ENCODE measurements at regions of chr18 and their contacts with region 1.

Region 1: GRCh38 chr18:79951578-79952455 is at the start of gene SLC66A2:
- DNase-seq: peak; percentile 85 to 98 (median 91)
- ATAC-seq: peak; percentile 86 to 91
- H3K4me3 Mint-ChIP-seq: peak within 1 kb of the TSS; percentile 77 to 93 (median 86)
- H3K27ac Mint-ChIP-seq: peak within 1 kb of the TSS; percentile 68 to 93 (median 83)
- H3K4me1 Mint-ChIP-seq: peaks cover 11 to 38% (median 25%) of the 10 kb centered on the region in 4 donors
- H3K27me3 Mint-ChIP-seq: no peaks in the 10 kb centered on the region
- polyA plus RNA-seq, gene SLC66A2: 14.1 to 22.0 (median 19.4) TPM

Region 2: GRCh38 chr18:79476918-79477571 is 474.8 kb before region 1 on chr18:
- POLR2A ChIA-PET with region 1: no interaction called
- DNase-seq: no peak
- ATAC-seq: no peak
- H3K4me3 Mint-ChIP-seq: peak overlapping the region in 1 of 10 donors; percentile 10
- H3K27ac Mint-ChIP-seq: peak overlapping the region; percentile 38 to 95 (median 80)
- H3K4me1 Mint-ChIP-seq: peaks cover 6 to 20% (median 12%) of the 10 kb centered on the region in 4 donors
- H3K27me3 Mint-ChIP-seq: no peaks in the 10 kb centered on the region

Region 3: DNA sequence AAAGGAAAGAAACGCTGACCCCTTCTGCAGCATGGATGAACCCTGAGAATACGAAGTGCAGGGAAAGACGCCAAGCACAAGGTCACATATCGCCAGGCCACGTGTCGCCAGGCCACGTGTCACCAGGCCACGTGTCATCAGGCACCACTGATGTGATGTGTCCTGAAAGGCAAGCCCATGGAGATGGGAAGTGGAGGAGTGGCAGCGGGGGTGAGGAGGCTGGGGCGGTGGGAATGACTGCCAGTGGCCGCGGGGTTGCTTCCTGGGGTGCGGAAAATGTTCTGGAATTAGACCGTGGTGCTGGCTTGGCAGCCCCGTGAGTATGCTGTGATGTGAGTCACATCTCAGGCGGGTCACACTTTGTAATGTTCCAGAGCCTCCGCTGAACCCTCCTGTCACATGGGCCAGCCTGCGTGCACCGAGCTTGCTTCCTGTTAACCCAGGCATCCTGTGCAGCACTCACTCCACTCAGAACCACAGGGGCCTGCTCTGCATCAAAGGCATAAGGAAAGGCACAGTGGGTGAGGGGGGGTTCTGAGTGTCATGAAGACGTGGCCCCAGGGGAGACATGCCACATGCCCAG is 39.3 kb before region 1 on chr18:
- POLR2A ChIA-PET with region 1: interaction called, 30 read pairs
- DNase-seq: peak; percentile 37 to 91 (median 62)
- ATAC-seq: peak; percentile 61 to 81
- H3K4me3 Mint-ChIP-seq: peak overlapping the region in 9 of 10 donors; percentile 39 to 83 (median 77)
- H3K27ac Mint-ChIP-seq: peak overlapping the region; percentile 92 to 100 (median 98)
- H3K4me1 Mint-ChIP-seq: peaks cover 22 to 51% (median 37%) of the 10 kb centered on the region in 4 donors
- H3K27me3 Mint-ChIP-seq: no peaks in the 10 kb centered on the region

Region 4: DNA sequence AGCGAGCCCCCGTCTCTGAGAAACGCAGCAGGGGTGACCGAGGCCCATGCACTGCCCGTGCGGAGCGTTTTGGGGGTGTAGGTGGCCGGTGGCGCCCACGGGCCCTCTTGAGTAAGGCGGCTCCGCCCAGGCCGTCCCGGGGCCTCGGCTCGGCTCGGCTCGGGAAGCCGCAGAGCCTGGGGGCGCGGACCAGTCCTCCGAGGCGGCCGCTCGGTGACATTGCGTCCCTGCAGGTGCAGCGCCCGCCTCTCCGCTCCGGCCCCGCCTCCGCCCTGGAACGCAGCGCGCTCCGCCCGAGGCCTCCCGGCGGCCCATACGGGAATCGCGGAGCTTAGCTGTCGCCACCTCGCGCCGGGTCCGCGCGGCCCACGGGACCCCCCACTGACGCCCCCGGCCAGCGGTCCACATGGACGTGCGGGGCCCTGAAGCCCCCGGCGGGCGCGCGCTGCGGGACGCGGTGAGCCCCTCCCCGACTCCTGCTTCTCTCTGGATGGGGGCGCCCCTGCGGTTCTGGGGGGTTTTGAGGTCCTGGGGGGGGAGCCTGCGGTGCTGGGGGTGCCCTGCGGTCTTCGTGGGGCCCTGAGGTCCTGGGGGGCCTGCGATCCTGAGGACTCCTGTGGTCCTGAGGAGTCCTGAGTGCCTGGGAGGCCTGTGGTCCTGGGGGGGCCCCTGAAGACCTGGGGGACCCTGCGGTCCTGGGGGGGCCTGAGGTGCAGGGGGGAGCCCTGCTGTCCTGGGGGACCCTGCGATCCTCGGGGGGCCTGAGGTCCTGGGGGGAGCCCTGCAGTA is 12.7 kb after region 1 on chr18 and contains the start of gene HSBP1L1:
- POLR2A ChIA-PET with region 1: interaction called, 17 read pairs
- DNase-seq: peak; percentile 59 to 83 (median 69)
- ATAC-seq: peak; percentile 85 to 94
- H3K4me3 Mint-ChIP-seq: peak within 1 kb of the TSS; percentile 81 to 94 (median 88)
- H3K27ac Mint-ChIP-seq: peak within 1 kb of the TSS; percentile 92 to 98 (median 96)
- H3K4me1 Mint-ChIP-seq: peaks cover 9 to 41% (median 35%) of the 10 kb centered on the region in 4 donors
- H3K27me3 Mint-ChIP-seq: no peaks in the 10 kb centered on the region
- polyA plus RNA-seq, gene HSBP1L1: 11.2 to 24.5 (median 16.0) TPM

Region 5: GRCh38 chr18:79988451-79989194 is 36.8 kb after region 1 on chr18 and contains the start of gene TXNL4A:
- POLR2A ChIA-PET with region 1: interaction called, 19 read pairs
- DNase-seq: peak in 9 of 10 donors; percentile 78 to 91 (median 84)
- ATAC-seq: peak; percentile 90 to 93
- H3K4me3 Mint-ChIP-seq: peak within 1 kb of the TSS; percentile 84 to 97 (median 93)
- H3K27ac Mint-ChIP-seq: peak within 1 kb of the TSS; percentile 92 to 98 (median 97)
- H3K4me1 Mint-ChIP-seq: peaks cover 16 to 43% (median 39%) of the 10 kb centered on the region in 4 donors
- H3K27me3 Mint-ChIP-seq: no peaks in the 10 kb centered on the region
- polyA plus RNA-seq, gene TXNL4A: 213 to 225 (median 217) TPM

Region 6: DNA sequence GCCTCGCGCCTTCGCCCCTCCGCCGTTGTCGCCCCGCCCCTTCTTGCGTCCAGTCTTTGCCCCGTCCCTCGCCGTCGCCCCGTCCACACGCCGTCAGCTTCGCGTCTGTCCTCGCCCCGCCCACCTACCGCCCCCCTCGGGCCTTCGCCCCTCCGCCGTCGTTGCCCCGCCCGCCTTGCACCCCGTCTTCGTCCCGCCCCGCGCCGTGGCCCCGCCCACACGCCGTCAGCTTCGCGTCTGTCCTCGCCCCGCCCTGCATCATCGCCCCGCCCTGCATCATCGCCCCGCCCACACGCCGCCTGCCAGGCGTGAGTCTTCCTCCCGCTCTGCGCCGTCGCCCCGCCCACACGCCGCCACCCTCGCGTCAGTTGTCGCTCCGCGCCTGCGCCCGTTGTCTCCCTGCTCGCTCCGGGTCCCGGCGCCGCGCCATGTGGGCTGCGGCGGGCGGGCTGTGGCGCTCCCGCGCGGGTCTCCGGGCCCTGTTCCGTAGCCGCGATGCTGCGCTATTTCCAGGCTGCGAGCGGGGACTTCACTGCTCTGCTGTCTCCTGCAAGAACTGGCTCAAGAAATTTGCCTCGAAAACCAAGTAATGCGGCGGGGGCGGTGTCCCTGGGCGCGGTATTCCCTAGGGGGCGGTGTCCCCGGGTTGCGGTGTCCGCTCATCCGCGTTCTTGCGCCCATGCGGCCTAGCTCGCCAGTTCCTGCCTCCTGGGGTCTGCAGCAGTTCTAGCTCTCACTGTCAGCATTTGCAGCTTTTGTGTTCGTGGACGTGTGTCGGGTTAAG is 82.4 kb after region 1 on chr18 and contains the start of gene RBFA:
- POLR2A ChIA-PET with region 1: interaction called, 12 read pairs
- DNase-seq: peak; percentile 92 to 100 (median 99)
- ATAC-seq: peak; percentile 70
- H3K4me3 Mint-ChIP-seq: peak within 1 kb of the TSS; percentile 85 to 97 (median 92)
- H3K27ac Mint-ChIP-seq: peak within 1 kb of the TSS; percentile 88 to 99 (median 94)
- H3K4me1 Mint-ChIP-seq: peaks cover 22 to 29% (median 28%) of the 10 kb centered on the region in 4 donors
- H3K27me3 Mint-ChIP-seq: no peaks in the 10 kb centered on the region
- polyA plus RNA-seq, gene RBFA: 14.8 to 15.4 (median 15.1) TPM

Measured in naive thymus-derived CD8-positive, alpha-beta T cell (primary cell).